CD8-positive, alpha-beta T cell (primary cell): ENCODE measurements at regions of chr12 and their contacts with region 1.

Region 1: GRCh38 chr12:42372154-42372791 is 46.3 kb downstream of the PPHLN1 start:
- DNase-seq: peak in 4 of 9 experiments; percentile 14 to 72 (median 39)
- ATAC-seq: peak; percentile 96
- H3K4me3 ChIP-seq: no peak overlapping the region
- H3K4me3 Mint-ChIP-seq: no peak overlapping the region
- H3K27ac ChIP-seq: no peak overlapping the region
- H3K27ac Mint-ChIP-seq: no peak overlapping the region
- H3K4me1 ChIP-seq: no peaks in the 10 kb centered on the region
- H3K4me1 Mint-ChIP-seq: peaks cover 9% of the 10 kb centered on the region
- H3K27me3 ChIP-seq: no peaks in the 10 kb centered on the region
- H3K27me3 Mint-ChIP-seq: no peaks in the 10 kb centered on the region
- CTCF ChIP-seq: peak; percentile 72

Region 2: DNA sequence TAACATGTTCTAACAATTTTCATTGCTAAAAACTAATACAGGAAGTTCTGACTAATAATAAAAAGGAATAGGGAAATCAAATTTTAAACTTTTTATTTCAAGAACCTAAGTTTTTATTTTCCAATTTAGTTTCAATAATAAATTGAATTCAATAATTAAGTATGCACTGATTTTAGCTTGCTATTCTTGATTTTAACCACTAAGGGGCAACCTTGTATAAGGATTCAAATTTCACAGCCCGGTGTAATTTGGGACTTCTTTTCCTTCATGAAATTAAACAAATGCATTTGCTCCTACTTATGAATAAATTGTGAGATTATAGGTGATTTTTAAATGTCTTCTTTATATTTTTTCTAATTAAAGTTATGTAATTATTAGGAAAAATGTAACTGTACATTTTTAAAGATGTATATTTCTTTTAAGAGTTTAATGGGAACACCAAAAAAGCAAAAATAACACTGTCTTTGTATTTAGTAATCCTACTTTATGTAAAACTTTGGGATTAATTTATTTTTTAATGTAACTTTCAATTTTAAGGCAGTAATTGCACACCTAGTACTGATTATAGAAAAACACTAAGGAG is 1425.6 kb before region 1 on chr12:
- CTCF ChIA-PET with region 1: interaction called, 3 read pairs
- POLR2A ChIA-PET with region 1: no interaction called
- intact Hi-C with region 1: loop called in 1 of 2 experiments (anchors 2 kb)
- DNase-seq: peak in 2 of 9 experiments; percentile 17 to 33
- ATAC-seq: no peak
- H3K4me3 ChIP-seq: no peak overlapping the region
- H3K4me3 Mint-ChIP-seq: no peak overlapping the region
- H3K27ac ChIP-seq: no peak overlapping the region
- H3K27ac Mint-ChIP-seq: no peak overlapping the region
- H3K4me1 ChIP-seq: no peaks in the 10 kb centered on the region
- H3K4me1 Mint-ChIP-seq: no peaks in the 10 kb centered on the region
- H3K27me3 ChIP-seq: no peaks in the 10 kb centered on the region
- H3K27me3 Mint-ChIP-seq: no peaks in the 10 kb centered on the region
- CTCF ChIP-seq: peak; percentile 61

Region 3: GRCh38 chr12:41684997-41685396 is 687.3 kb before region 1 on chr12:
- CTCF ChIA-PET with region 1: no interaction called
- POLR2A ChIA-PET with region 1: no interaction called
- intact Hi-C with region 1: loop called in 1 of 2 experiments (anchors 10 kb)
- DNase-seq: no peak
- ATAC-seq: no peak
- H3K4me3 ChIP-seq: no peak overlapping the region
- H3K4me3 Mint-ChIP-seq: no peak overlapping the region
- H3K27ac ChIP-seq: no peak overlapping the region
- H3K27ac Mint-ChIP-seq: no peak overlapping the region
- H3K4me1 ChIP-seq: no peaks in the 10 kb centered on the region
- H3K4me1 Mint-ChIP-seq: no peaks in the 10 kb centered on the region
- H3K27me3 ChIP-seq: no peaks in the 10 kb centered on the region
- H3K27me3 Mint-ChIP-seq: no peaks in the 10 kb centered on the region
- CTCF ChIP-seq: no peak

Region 4: GRCh38 chr12:42325653-42326474 is 46.4 kb before region 1 on chr12 and contains the starts of genes PPHLN1 and ZCRB1:
- CTCF ChIA-PET with region 1: no interaction called
- POLR2A ChIA-PET with region 1: no interaction called
- intact Hi-C with region 1: loop called in 1 of 2 experiments (anchors 5 kb)
- DNase-seq: peak; percentile 54 to 89 (median 78)
- ATAC-seq: peak; percentile 89
- H3K4me3 ChIP-seq: peak within 1 kb of the TSS; percentile 68 to 95
- H3K4me3 Mint-ChIP-seq: peak within 1 kb of the TSS; percentile 98
- H3K27ac ChIP-seq: peak within 1 kb of the TSS; percentile 79 to 91
- H3K27ac Mint-ChIP-seq: peak within 1 kb of the TSS; percentile 98
- H3K4me1 ChIP-seq: peaks cover 24% of the 10 kb centered on the region
- H3K4me1 Mint-ChIP-seq: peaks cover 54% of the 10 kb centered on the region
- H3K27me3 ChIP-seq: no peaks in the 10 kb centered on the region
- H3K27me3 Mint-ChIP-seq: no peaks in the 10 kb centered on the region
- CTCF ChIP-seq: no peak
- total RNA-seq, gene PPHLN1: 104 to 108 TPM
- total RNA-seq, gene ZCRB1: 35.7 to 39.4 TPM